Prostate gland (tissue), 2 donors: ENCODE measurements at regions of chr19 and their contacts with region 1.

Region 1: DNA sequence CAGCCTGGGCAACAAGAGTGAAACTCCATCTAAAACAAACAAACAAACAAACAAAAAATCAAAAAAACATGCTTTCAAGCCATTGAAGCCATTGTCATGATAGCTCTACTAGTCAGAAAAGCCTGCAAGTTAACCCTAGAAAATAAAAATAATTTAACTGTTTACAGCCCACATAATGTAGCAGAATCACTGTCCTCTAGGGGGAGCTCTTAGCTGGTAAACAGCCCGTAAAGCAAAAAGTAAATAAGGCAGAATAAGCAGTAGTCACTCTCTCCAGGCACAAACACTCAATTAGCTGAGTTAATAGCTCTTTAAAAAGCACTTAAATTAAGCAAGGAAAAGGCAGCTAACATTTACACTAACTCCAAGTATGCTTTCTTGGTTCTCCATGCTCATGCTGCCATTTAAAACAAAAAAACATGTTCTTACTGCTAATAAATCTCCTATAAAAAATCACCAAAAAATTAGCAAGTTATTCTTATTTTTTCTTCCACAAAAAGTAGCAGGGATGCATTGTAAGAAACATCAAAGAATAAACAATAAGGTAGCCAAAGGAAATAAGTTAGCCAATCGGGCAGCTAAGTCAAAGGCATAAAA is 11.3 kb downstream of the LILRB4 start:
- DNase-seq: no peak
- H3K4me3 ChIP-seq: no peak overlapping the region
- H3K27ac ChIP-seq: no peak overlapping the region
- H3K4me1 ChIP-seq: no peaks in the 10 kb centered on the region
- H3K27me3 ChIP-seq: peaks cover 5% of the 10 kb centered on the region
- CTCF ChIP-seq: peak in 3 of 4 experiments; percentile 15 to 53 (median 46)
- POLR2A ChIP-seq: no peak

Region 2: DNA sequence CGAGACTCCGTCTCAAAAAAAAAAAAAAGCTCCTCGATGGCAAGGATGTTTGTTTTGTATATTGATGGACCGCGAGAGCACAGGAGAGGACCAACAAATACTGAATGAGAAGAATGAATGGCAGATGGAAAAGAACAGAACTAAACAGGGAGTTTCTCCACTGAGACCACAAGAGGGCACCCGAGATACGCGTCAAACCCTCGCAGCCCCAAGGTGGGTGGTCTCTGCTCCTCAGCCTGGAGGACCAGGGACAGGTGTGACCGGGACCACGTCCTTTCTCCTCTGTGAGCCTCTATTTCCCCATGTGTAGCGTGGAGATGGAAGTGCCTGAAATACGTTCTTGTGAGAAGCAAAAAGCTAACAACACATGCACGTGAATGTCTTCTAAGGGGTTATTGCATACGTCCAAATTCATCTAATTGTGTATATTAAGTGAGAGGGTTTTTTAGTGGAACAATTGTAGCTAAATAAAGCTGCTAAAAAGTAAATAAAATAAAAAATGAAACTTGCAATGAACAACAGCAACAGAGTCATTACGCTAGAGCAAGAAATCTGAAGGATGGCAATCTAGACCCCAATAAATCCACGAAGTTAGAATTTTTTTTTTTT is 192.7 kb before region 1 on chr19:
- intact Hi-C with region 1: loop called (anchors 10 kb)
- DNase-seq: no peak
- H3K4me3 ChIP-seq: no peak overlapping the region
- H3K27ac ChIP-seq: no peak overlapping the region
- H3K4me1 ChIP-seq: no peaks in the 10 kb centered on the region
- H3K27me3 ChIP-seq: no peaks in the 10 kb centered on the region
- CTCF ChIP-seq: peak in 3 of 4 experiments; percentile 19 to 45 (median 42)
- POLR2A ChIP-seq: no peak